ENCODE measurements at regions of chr20 and their contacts with region 1.

Region 1: GRCh38 chr20:8664778-8665177 is 404.1 kb upstream of the PLCB4 start:
- DNase-seq: no peak
- ATAC-seq: no peak
- H3K4me3 ChIP-seq: no peak overlapping the region
- H3K4me3 Mint-ChIP-seq: no peak overlapping the region
- H3K27ac ChIP-seq: no peak overlapping the region
- H3K27ac Mint-ChIP-seq: no peak overlapping the region
- H3K4me1 ChIP-seq: no peaks in the 10 kb centered on the region
- H3K4me1 Mint-ChIP-seq: peaks cover 0 to 5% (median 3%) of the 10 kb centered on the region in 7 donors
- H3K27me3 ChIP-seq: no peaks in the 10 kb centered on the region
- H3K27me3 Mint-ChIP-seq: no peaks in the 10 kb centered on the region

Region 2: DNA sequence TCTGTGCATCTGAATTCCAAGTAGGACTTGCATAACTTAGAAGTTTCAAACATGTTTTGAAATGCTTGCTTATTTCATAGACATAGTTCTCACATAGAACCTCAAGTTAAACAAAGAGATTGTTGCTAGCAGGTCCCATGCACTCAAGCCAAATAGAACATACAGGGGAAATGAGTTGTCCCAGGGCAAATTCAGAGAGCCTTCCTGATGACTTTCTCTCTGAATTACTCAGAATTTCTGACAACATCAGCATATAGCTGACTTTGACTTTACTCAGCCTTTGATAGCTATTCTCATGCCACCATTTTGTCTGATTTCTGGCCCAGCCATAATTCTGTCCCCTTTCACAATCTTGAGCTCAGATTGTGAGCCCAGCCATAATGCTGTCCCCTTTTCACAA is 70.9 kb after region 1 on chr20:
- CTCF ChIA-PET with region 1: no interaction called
- POLR2A ChIA-PET with region 1: no interaction called
- intact Hi-C with region 1: loop called in 1 of 2 experiments (anchors 5 kb)
- DNase-seq: no peak
- ATAC-seq: no peak
- H3K4me3 ChIP-seq: no peak overlapping the region
- H3K4me3 Mint-ChIP-seq: no peak overlapping the region
- H3K27ac ChIP-seq: no peak overlapping the region
- H3K27ac Mint-ChIP-seq: no peak overlapping the region
- H3K4me1 ChIP-seq: no peaks in the 10 kb centered on the region
- H3K4me1 Mint-ChIP-seq: no peaks in the 10 kb centered on the region
- H3K27me3 ChIP-seq: no peaks in the 10 kb centered on the region
- H3K27me3 Mint-ChIP-seq: no peaks in the 10 kb centered on the region

Measured in naive thymus-derived CD4-positive, alpha-beta T cell (primary cell).